BJ (cell line): ENCODE measurements at regions of chr16 and their contacts with region 1.

Region 1: GRCh38 chr16:23435500-23435899 is 17.5 kb downstream of the COG7 start:
- DNase-seq: no peak
- H3K4me3 ChIP-seq: no peak overlapping the region
- H3K27me3 ChIP-seq: no peaks in the 10 kb centered on the region
- CTCF ChIP-seq: peak; percentile 87

Region 2: DNA sequence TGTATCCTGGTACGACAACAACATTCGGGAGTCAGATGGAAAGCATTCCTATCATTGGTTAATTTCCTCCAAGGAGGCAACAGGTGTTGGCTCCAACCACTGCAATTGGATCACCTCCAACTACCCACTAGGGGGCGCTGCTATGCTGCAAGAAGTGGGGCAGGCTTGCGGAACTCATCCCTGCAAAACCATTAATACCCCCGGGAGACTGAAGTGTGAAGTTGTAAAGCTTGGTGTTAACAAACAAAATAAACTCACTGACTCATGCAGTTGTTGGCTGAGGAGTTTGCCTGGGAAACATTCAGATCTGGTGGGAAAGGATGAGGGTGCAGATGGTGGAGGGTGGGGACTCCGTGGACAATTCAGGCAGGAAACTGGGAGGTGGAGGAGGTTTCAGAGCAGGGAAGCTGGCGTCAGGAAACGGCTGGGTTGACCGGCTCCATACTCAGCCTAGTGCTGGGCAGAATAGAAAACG is 536.6 kb before region 1 on chr16:
- CTCF ChIA-PET with region 1: interaction called, 12 read pairs
- POLR2A ChIA-PET with region 1: no interaction called
- DNase-seq: no peak
- H3K4me3 ChIP-seq: no peak overlapping the region
- H3K27me3 ChIP-seq: peaks cover 1% of the 10 kb centered on the region; the same call in 1 of the 2 replicates
- CTCF ChIP-seq: peak; percentile 77

Region 3: GRCh38 chr16:23182460-23183309 is 252.8 kb before region 1 on chr16 and contains the start of gene SCNN1G:
- CTCF ChIA-PET with region 1: interaction called, 292 read pairs
- POLR2A ChIA-PET with region 1: no interaction called
- DNase-seq: no peak
- H3K4me3 ChIP-seq: peak within 1 kb of the TSS; percentile 17; the same call in 1 of the 2 replicates
- H3K27me3 ChIP-seq: peaks cover 21% of the 10 kb centered on the region
- CTCF ChIP-seq: peak; percentile 65
- polyA plus RNA-seq, gene SCNN1G: not detected in 2 replicates

Region 4: GRCh38 chr16:23408823-23409298 is 26.6 kb before region 1 on chr16:
- CTCF ChIA-PET with region 1: interaction called, 21 read pairs
- POLR2A ChIA-PET with region 1: no interaction called
- DNase-seq: peak; percentile 38
- H3K4me3 ChIP-seq: no peak overlapping the region
- H3K27me3 ChIP-seq: no peaks in the 10 kb centered on the region
- CTCF ChIP-seq: no peak

Region 5: GRCh38 chr16:23423496-23424049 is 11.9 kb before region 1 on chr16:
- CTCF ChIA-PET with region 1: interaction called, 59 read pairs
- POLR2A ChIA-PET with region 1: no interaction called
- DNase-seq: peak; percentile 97
- H3K4me3 ChIP-seq: no peak overlapping the region
- H3K27me3 ChIP-seq: no peaks in the 10 kb centered on the region
- CTCF ChIP-seq: no peak